ENCODE measurements at regions of chr20 and their contacts with region 1.

Region 1: GRCh38 chr20:3051385-3052019 is 5.7 kb downstream of the MRPS26 start:
- DNase-seq: no peak
- H3K4me3 Mint-ChIP-seq: no peak overlapping the region
- H3K27ac Mint-ChIP-seq: no peak overlapping the region
- H3K4me1 Mint-ChIP-seq: peaks cover 28% of the 10 kb centered on the region
- H3K27me3 Mint-ChIP-seq: no peaks in the 10 kb centered on the region

Region 2: DNA sequence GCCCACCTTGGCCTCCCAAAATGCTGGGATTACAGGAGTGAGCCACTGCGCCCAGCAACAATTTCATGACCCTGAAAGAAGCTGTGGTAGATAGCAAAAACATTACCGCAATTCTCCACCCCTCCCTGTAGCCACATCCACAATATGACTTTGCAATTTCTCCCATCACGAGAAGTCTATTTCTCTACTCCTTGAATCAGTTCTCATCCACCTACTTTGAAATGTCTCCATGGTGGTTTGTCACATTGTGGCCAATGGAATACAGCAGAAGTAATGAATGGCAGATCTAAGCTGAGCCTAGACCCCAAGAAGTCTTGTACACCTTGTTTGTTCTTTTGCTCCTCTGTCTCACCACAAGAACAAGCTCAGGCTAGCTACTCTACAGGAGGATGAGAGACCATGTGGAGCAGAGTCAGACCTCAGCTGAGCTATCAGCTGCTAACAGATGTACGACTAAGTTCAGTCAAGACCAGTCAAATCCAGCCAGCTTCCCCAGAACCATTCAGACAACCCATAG is 26.2 kb after region 1 on chr20:
- CTCF ChIA-PET with region 1: interaction called, 13 read pairs
- DNase-seq: peak; percentile 55
- H3K4me3 Mint-ChIP-seq: peak overlapping the region; percentile 6
- H3K27ac Mint-ChIP-seq: peak overlapping the region; percentile 75
- H3K4me1 Mint-ChIP-seq: peaks cover 41% of the 10 kb centered on the region
- H3K27me3 Mint-ChIP-seq: peaks cover 65% of the 10 kb centered on the region

Region 3: DNA sequence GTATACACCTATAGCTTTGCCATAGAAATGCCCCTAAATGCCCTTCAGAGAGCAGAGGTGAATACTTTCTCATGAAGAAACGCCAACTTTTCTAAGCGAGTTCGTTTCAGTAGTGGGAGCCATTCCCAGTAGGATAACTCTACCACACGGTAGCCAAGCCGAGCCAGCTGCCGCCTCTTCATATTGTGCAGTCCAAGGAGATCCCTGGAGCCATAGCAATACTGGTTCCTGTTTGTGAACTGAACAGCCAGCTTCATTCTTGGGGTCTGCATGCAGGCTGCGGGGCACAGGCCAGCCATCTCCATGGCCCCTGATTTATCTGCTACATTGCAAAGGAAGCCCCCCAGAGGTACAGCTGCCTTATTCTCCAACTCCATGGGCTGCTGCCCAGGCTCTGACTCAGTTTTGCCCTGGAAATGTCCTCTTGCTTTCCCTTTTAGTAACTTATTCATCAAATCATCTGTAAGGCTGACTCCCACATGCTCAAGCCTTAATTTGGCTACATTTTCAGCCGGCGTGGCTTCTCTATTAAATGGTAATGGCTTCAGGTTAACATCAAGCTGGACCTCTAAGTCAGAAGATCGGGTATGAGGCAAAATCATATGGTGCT is 95.3 kb after region 1 on chr20:
- CTCF ChIA-PET with region 1: no interaction called
- DNase-seq: no peak
- H3K4me3 Mint-ChIP-seq: no peak overlapping the region
- H3K27ac Mint-ChIP-seq: no peak overlapping the region
- H3K4me1 Mint-ChIP-seq: peaks cover 12% of the 10 kb centered on the region
- H3K27me3 Mint-ChIP-seq: no peaks in the 10 kb centered on the region

Region 4: DNA sequence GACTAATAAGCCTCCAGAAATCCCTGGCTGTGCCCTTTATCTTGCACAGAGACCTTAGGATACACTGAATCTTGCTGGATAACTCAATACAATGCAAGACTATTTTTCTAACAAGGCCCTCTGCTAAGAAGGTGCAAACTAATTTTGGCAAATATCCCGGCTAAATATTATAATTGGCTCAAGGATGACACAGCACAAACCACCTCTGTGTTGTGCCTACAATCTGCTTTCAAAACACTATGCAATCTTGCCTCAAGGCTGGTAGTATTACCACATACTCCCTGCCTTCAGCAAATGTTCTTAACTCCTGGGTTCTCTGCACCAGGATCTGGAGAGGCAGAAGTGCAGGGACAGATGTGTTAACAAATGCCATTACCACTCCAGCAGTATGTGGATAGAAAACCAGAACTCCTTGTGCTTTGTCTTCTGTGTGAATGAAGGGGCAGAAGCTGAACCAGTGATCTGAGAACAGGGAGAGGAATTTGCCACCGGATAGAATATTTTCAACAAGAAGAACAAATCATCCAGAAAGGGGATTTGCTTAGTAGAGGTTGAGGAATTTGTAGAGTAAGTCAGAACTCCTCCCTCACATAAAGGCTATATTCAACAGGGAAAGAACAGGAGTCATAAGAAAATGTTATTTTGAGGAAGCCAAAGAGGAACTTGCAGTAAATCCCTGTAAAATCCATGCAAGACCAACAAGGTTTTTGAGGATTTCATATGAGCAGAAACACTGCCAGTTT is 261.6 kb after region 1 on chr20:
- CTCF ChIA-PET with region 1: interaction called, 11 read pairs
- DNase-seq: no peak
- H3K4me3 Mint-ChIP-seq: no peak overlapping the region
- H3K27ac Mint-ChIP-seq: no peak overlapping the region
- H3K4me1 Mint-ChIP-seq: no peaks in the 10 kb centered on the region
- H3K27me3 Mint-ChIP-seq: peaks cover 4% of the 10 kb centered on the region

Measured in activated naive CD4-positive, alpha-beta T cell treated with anti-CD3 and anti-CD28 coated beads, Interleukin-2, amount 10 ng/mL, durations not matched to agents 7 days and 5 days (primary cell).